Activated CD4-positive, alpha-beta memory T cell treated with anti-CD3 and anti-CD28 coated beads, Interleukin-2, amount 10 ng/mL, durations not matched to agents 7 days and 5 days (primary cell): ENCODE measurements at regions of chr10 and their contacts with region 1.

Region 1: GRCh38 chr10:72215652-72216549 is at the starts of genes ANAPC16 and ASCC1:
- DNase-seq: peak; percentile 94
- H3K4me3 Mint-ChIP-seq: peak within 1 kb of the TSS; percentile 98
- H3K27ac Mint-ChIP-seq: peak within 1 kb of the TSS; percentile 99
- H3K4me1 Mint-ChIP-seq: peaks cover 61% of the 10 kb centered on the region
- H3K27me3 Mint-ChIP-seq: no peaks in the 10 kb centered on the region
- total RNA-seq, gene ANAPC16: 94.2 to 101 TPM
- total RNA-seq, gene ASCC1: 35.5 to 36.2 TPM

Region 2: GRCh38 chr10:72229261-72230251 is 13.7 kb after region 1 on chr10:
- CTCF ChIA-PET with region 1: interaction called, 6 read pairs
- POLR2A ChIA-PET with region 1: interaction called, 11 read pairs
- DNase-seq: no peak
- H3K4me3 Mint-ChIP-seq: no peak overlapping the region
- H3K27ac Mint-ChIP-seq: peak overlapping the region; percentile 27
- H3K4me1 Mint-ChIP-seq: peaks cover 31% of the 10 kb centered on the region
- H3K27me3 Mint-ChIP-seq: no peaks in the 10 kb centered on the region